Activated B cell treated with CpG ODN at 0.5 μM for 24 hours (primary cell): ENCODE measurements at regions of chr20 and their contacts with region 1.

Region 1: GRCh38 chr20:48657475-48658470 is 170.0 kb downstream of the PREX1 start:
- DNase-seq: peak; percentile 46
- ATAC-seq: peak; percentile 95
- H3K4me3 Mint-ChIP-seq: no peak overlapping the region
- H3K27ac Mint-ChIP-seq: no peak overlapping the region
- H3K4me1 Mint-ChIP-seq: peaks cover 5% of the 10 kb centered on the region
- H3K27me3 Mint-ChIP-seq: no peaks in the 10 kb centered on the region
- CTCF ChIP-seq: peak; percentile 78

Region 2: DNA sequence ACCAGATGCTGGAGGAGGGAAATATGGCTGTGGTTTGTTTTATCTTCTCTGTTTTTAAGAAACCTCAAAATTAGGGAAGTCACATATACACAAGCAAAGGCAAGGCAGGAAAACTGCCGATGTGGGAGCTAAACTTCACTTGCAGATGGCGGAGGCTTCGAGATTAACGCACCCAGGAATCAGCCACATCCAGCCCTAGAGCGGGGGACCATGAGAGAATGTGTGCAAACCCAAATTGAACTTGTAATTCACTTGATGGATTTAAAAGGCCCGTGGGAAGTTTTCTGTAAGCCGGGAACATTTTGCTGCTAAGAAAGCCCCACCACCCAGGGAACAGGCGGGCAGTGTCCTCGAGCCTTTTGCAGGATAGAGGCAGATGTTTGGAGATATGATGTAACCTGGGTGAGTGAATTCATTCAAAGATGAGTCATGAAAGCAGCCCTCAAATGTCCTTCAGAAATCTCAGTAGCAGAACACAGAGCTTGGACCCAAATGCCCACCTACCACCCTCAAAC is 130.1 kb after region 1 on chr20:
- CTCF ChIA-PET with region 1: interaction called, 9 read pairs
- POLR2A ChIA-PET with region 1: no interaction called
- intact Hi-C with region 1: loop called (anchors 2 kb)
- DNase-seq: peak; percentile 18
- ATAC-seq: peak; percentile 16
- H3K4me3 Mint-ChIP-seq: peak overlapping the region; percentile 21
- H3K27ac Mint-ChIP-seq: peak overlapping the region; percentile 88
- H3K4me1 Mint-ChIP-seq: no peaks in the 10 kb centered on the region
- H3K27me3 Mint-ChIP-seq: no peaks in the 10 kb centered on the region
- CTCF ChIP-seq: no peak

Region 3: GRCh38 chr20:48864791-48865314 is 207.1 kb after region 1 on chr20:
- CTCF ChIA-PET with region 1: no interaction called
- POLR2A ChIA-PET with region 1: no interaction called
- intact Hi-C with region 1: no loop called
- DNase-seq: no peak
- ATAC-seq: peak; percentile 14
- H3K4me3 Mint-ChIP-seq: peak overlapping the region; percentile 9
- H3K27ac Mint-ChIP-seq: no peak overlapping the region
- H3K4me1 Mint-ChIP-seq: peaks cover 45% of the 10 kb centered on the region
- H3K27me3 Mint-ChIP-seq: no peaks in the 10 kb centered on the region
- CTCF ChIP-seq: no peak

Region 4: GRCh38 chr20:48875911-48876640 is 218.3 kb after region 1 on chr20:
- CTCF ChIA-PET with region 1: interaction called, 26 read pairs
- POLR2A ChIA-PET with region 1: interaction called, 6 read pairs
- intact Hi-C with region 1: loop called (anchors 1 kb)
- DNase-seq: peak; percentile 25
- ATAC-seq: peak; percentile 84
- H3K4me3 Mint-ChIP-seq: no peak overlapping the region
- H3K27ac Mint-ChIP-seq: peak overlapping the region; percentile 36
- H3K4me1 Mint-ChIP-seq: peaks cover 44% of the 10 kb centered on the region
- H3K27me3 Mint-ChIP-seq: no peaks in the 10 kb centered on the region
- CTCF ChIP-seq: no peak

Region 5: GRCh38 chr20:48897995-48898597 is 240.3 kb after region 1 on chr20:
- CTCF ChIA-PET with region 1: interaction called, 25 read pairs
- POLR2A ChIA-PET with region 1: no interaction called
- intact Hi-C with region 1: no loop called
- DNase-seq: no peak
- ATAC-seq: no peak
- H3K4me3 Mint-ChIP-seq: peak overlapping the region; percentile 45
- H3K27ac Mint-ChIP-seq: peak overlapping the region; percentile 15
- H3K4me1 Mint-ChIP-seq: peaks cover 18% of the 10 kb centered on the region
- H3K27me3 Mint-ChIP-seq: no peaks in the 10 kb centered on the region
- CTCF ChIP-seq: no peak

Region 6: GRCh38 chr20:48904365-48905296 is 246.9 kb after region 1 on chr20:
- CTCF ChIA-PET with region 1: interaction called, 129 read pairs
- POLR2A ChIA-PET with region 1: interaction called, 15 read pairs
- intact Hi-C with region 1: loop called (anchors 1 kb)
- DNase-seq: no peak
- ATAC-seq: peak; percentile 83
- H3K4me3 Mint-ChIP-seq: peak overlapping the region; percentile 45
- H3K27ac Mint-ChIP-seq: peak overlapping the region; percentile 30
- H3K4me1 Mint-ChIP-seq: peaks cover 10% of the 10 kb centered on the region
- H3K27me3 Mint-ChIP-seq: no peaks in the 10 kb centered on the region
- CTCF ChIP-seq: no peak

Region 7: DNA sequence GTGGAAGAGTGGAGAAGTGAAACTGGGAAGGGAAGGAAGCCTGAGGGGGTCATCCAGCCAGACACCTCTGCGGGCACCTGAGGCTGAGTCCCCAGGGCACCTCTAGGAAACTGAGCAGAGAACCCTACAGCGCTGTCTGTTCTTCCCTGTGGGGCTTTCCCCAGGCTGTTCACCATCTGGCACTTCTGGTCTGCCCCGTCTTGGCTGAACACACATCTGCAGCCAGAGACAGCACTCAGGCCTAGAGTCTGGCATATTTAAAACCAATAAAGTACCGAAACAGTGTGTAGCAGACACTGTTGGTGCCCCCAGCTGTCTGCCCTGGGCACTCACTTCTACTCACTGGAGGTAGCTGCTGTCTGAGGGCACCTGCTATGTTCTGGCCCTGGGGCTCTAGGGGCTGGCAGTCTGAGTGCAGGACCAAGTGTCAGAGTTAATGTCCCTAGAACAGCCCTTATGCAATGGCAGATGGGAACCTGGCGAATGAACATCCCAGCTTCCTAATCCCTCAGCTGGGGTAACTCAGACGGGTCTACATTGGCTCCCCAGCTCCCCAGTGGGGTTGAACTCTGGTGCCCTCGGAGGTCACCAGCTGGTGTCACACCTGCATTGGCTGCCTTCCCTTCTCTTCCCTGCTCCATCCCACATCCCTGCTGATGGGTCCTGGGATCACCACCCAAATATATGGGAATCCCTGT is 254.4 kb after region 1 on chr20:
- CTCF ChIA-PET with region 1: interaction called, 129 read pairs
- POLR2A ChIA-PET with region 1: interaction called, 3 read pairs
- intact Hi-C with region 1: no loop called
- DNase-seq: peak; percentile 55
- ATAC-seq: peak; percentile 97
- H3K4me3 Mint-ChIP-seq: peak overlapping the region; percentile 32
- H3K27ac Mint-ChIP-seq: peak overlapping the region; percentile 84
- H3K4me1 Mint-ChIP-seq: peaks cover 37% of the 10 kb centered on the region
- H3K27me3 Mint-ChIP-seq: no peaks in the 10 kb centered on the region
- CTCF ChIP-seq: no peak

Region 8: GRCh38 chr20:48949304-48950170 is 291.8 kb after region 1 on chr20:
- CTCF ChIA-PET with region 1: interaction called, 7 read pairs
- POLR2A ChIA-PET with region 1: no interaction called
- intact Hi-C with region 1: loop called (anchors 1 kb)
- DNase-seq: no peak
- ATAC-seq: no peak
- H3K4me3 Mint-ChIP-seq: no peak overlapping the region
- H3K27ac Mint-ChIP-seq: no peak overlapping the region
- H3K4me1 Mint-ChIP-seq: no peaks in the 10 kb centered on the region
- H3K27me3 Mint-ChIP-seq: no peaks in the 10 kb centered on the region
- CTCF ChIP-seq: no peak